Natural killer cell (primary cell): ENCODE measurements at regions of chr2 and their contacts with region 1.

Region 1: GRCh38 chr2:69914170-69914960 is 544 bp upstream of the MXD1 start:
- DNase-seq: peak; percentile 99 to 100
- ATAC-seq: peak; percentile 85 to 95 (median 87)
- H3K4me3 ChIP-seq: peak overlapping the region; percentile 76
- H3K4me3 Mint-ChIP-seq: peak overlapping the region; percentile 85
- H3K27ac ChIP-seq: peak overlapping the region; percentile 91
- H3K27ac Mint-ChIP-seq: peak overlapping the region; percentile 91 to 98
- H3K4me1 ChIP-seq: peaks cover 13% of the 10 kb centered on the region
- H3K4me1 Mint-ChIP-seq: peaks cover 25 to 32% of the 10 kb centered on the region in 2 donors
- H3K27me3 ChIP-seq: no peaks in the 10 kb centered on the region
- H3K27me3 Mint-ChIP-seq: no peaks in the 10 kb centered on the region
- CTCF ChIP-seq: no peak

Region 2: GRCh38 chr2:69946351-69947077 is 32.1 kb after region 1 on chr2:
- intact Hi-C with region 1: loop called (anchors 2 kb)
- DNase-seq: peak; percentile 52 to 75
- ATAC-seq: peak; percentile 87
- H3K4me3 ChIP-seq: no peak overlapping the region
- H3K4me3 Mint-ChIP-seq: peak overlapping the region; percentile 82
- H3K27ac ChIP-seq: peak overlapping the region; percentile 49
- H3K27ac Mint-ChIP-seq: peak overlapping the region; percentile 78 to 91
- H3K4me1 ChIP-seq: peaks cover 36% of the 10 kb centered on the region
- H3K4me1 Mint-ChIP-seq: peaks cover 34 to 42% of the 10 kb centered on the region in 2 donors
- H3K27me3 ChIP-seq: no peaks in the 10 kb centered on the region
- H3K27me3 Mint-ChIP-seq: no peaks in the 10 kb centered on the region
- CTCF ChIP-seq: no peak

Region 3: DNA sequence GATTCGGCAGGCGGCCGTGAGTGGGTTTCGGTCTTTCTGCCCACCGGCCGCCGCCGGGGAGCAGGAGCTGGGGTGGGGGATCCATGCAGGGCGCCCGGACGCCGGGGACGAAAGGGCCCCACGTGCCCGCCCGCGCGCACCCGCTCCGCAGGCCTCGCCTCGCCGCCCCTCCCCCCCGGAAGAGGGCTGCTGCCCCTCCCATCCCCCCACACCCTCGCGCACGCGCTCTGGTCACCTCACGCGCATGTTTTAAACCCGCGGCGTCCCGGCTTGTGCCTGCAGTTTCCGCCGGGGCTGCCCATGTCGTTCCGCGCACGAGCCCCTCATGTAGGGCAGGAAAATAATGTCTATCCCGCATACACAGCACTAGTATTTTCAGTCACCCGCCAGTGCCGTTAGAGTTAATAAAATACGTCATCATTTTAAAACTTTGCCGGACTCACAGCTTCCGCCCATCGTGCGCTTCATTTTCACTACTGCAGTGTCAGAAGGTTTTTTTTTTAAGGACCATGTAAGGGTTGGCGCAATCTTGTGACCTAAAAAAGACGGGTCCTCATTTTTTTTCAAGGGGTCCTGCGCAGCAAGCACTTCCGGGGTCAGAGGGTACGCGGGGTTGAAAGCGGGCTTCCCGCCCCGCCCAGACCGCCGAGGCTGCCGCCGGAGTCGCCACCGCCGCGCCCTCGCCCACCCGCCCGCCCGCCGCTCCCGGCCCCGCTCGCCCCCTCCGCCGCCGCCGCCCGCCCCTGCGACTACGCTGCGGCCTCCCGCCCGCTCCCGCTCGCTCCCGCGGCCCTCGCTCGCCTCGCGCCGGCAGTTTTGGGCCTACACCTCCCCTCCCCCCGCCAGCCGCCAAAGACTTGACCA is 172.7 kb after region 1 on chr2 and contains the start of gene PCBP1:
- intact Hi-C with region 1: loop called (anchors 1 kb)
- DNase-seq: peak; percentile 98
- ATAC-seq: peak; percentile 62 to 85 (median 71)
- H3K4me3 ChIP-seq: peak within 1 kb of the TSS; percentile 94
- H3K4me3 Mint-ChIP-seq: peak within 1 kb of the TSS; percentile 98
- H3K27ac ChIP-seq: peak within 1 kb of the TSS; percentile 98
- H3K27ac Mint-ChIP-seq: peak within 1 kb of the TSS; percentile 99 to 100
- H3K4me1 ChIP-seq: peaks cover 63% of the 10 kb centered on the region
- H3K4me1 Mint-ChIP-seq: peaks cover 79 to 81% of the 10 kb centered on the region in 2 donors
- H3K27me3 ChIP-seq: no peaks in the 10 kb centered on the region
- H3K27me3 Mint-ChIP-seq: no peaks in the 10 kb centered on the region
- CTCF ChIP-seq: no peak
- total RNA-seq, gene PCBP1: 329 to 358 (median 352) TPM

Region 4: DNA sequence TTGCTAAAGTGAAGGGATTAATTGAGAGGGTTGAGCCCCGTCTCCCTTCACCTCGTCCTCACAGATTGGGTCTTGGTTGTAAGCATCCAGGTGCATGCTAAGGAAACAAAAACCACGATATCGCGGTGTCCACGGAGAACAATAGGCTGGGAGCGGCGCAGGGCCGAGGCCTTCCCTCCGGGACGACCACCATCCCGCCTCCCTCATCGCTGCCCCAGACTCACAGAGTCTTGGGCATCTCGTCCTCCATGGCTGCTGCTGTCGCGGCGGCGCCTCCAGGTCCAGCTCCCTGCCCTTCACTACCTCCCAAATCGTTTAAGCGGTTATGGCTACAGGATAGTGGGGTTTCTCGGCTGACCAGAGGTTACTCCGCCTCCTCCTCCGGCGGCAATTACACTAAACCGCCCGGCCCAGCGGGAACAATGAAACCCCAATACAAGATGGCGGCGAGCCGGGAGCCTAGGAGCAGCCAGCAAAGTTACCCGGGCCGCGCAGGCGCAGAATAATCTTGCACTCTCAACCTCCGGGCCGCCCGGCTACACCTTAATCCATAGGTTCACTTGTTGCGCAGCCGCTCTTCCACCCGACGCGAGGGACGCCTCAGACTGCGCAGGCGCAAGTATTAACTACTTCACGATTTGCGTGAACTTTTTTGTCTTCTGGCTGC is 333.9 kb after region 1 on chr2 and contains the start of gene TIA1:
- intact Hi-C with region 1: loop called (anchors 1 kb)
- DNase-seq: peak; percentile 97 to 100
- ATAC-seq: peak; percentile 94 to 98 (median 96)
- H3K4me3 ChIP-seq: peak within 1 kb of the TSS; percentile 85
- H3K4me3 Mint-ChIP-seq: peak within 1 kb of the TSS; percentile 98
- H3K27ac ChIP-seq: peak within 1 kb of the TSS; percentile 92
- H3K27ac Mint-ChIP-seq: peak within 1 kb of the TSS; percentile 91 to 98
- H3K4me1 ChIP-seq: peaks cover 9% of the 10 kb centered on the region
- H3K4me1 Mint-ChIP-seq: peaks cover 37 to 45% of the 10 kb centered on the region in 2 donors
- H3K27me3 ChIP-seq: no peaks in the 10 kb centered on the region
- H3K27me3 Mint-ChIP-seq: no peaks in the 10 kb centered on the region
- CTCF ChIP-seq: no peak
- total RNA-seq, gene TIA1: 76.9 to 113 (median 93.2) TPM

Region 5: DNA sequence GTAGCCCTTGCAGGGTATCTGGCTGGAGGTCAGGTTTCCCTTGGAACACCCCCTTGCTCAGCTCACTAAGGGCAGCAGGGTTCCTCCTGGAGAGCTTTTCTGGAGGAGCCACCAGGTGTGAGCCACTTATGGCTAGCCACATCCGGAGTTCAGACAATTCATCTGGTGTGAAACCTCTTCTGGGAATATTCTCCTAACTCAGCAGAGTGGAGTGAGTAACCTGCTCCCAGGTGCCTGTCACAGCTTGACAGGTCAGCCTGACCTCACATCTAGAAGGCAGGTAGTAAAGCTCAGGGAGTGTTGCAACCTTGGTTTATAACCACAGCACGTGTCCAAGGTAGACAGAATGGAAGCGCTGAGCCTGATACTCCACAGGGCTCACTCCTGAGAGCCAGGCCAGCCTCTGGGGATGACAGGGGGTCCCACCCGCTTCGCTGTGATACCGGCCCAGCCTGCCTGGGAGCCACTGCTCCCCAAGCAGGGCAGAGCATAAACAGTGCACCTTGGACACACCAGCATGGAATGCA is 701.9 kb after region 1 on chr2:
- intact Hi-C with region 1: loop called (anchors 5 kb)
- DNase-seq: no peak
- ATAC-seq: no peak
- H3K4me3 ChIP-seq: no peak overlapping the region
- H3K4me3 Mint-ChIP-seq: no peak overlapping the region
- H3K27ac ChIP-seq: no peak overlapping the region
- H3K27ac Mint-ChIP-seq: no peak overlapping the region
- H3K4me1 ChIP-seq: no peaks in the 10 kb centered on the region
- H3K4me1 Mint-ChIP-seq: no peaks in the 10 kb centered on the region
- H3K27me3 ChIP-seq: no peaks in the 10 kb centered on the region
- H3K27me3 Mint-ChIP-seq: peaks cover 13 to 28% of the 10 kb centered on the region in 2 donors
- CTCF ChIP-seq: no peak